Activated T-helper 1 cell treated with anti-CD3 and anti-CD28 coated beads, Interleukin-12 subunit alpha, Interleukin-12 subunit beta, Interleukin-2, Interleukin-4 antibody, amounts not matched to agents 30 ng/mL and 10 ng/mL and 1 ng/mL, durations not matched to agents 14 hours and 24 hours and 36 hours (primary cell): ENCODE measurements at regions of chr3 and their contacts with region 1.

Region 1: DNA sequence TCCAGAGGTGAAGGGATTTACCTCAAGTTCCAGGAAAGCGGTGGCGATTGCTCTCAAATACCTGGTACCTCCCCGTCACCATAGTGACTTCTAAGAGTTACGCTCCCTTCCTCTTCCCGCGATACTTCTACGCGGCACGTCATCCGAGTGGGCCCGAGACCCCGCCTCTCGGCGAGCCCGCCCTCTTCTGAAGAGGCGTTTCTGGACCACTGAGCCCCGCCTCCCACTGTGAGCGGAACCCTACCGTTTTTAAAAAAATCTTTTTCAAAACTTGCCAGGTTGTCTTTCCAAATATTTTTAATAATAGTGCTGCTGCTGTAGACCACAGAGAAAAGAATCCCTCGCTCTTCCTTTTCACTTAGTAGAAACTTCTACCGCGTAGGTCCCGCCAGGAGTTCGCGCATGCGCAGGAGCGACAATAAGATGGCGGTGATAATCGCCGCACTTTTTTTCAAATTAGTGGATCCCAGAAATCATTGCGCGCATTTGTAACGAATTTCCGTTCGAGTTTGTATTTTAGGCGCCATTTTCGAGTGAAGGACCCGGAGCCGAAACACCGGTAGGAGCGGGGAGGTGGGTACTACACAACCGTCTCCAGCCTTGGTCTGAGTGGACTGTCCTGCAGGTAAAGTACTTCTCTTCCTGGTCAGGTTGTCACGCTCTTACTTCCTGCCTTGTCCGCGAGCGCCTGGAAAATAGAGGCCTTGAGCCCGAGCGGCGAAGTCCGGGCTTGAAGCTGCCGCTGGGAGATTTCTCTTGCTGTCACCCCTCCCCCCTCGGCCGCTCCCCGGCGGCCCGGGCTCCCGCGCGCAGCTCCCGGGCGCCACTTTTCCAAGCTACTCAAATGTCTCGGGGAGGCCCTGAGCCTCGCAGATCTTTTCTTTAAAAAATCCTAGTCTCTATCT is at the starts of genes IFT80 and SMC4:
- DNase-seq: peak; percentile 93
- H3K4me3 Mint-ChIP-seq: peak within 1 kb of the TSS; percentile 96
- H3K27ac Mint-ChIP-seq: peak within 1 kb of the TSS; percentile 98
- H3K4me1 Mint-ChIP-seq: peaks cover 57% of the 10 kb centered on the region
- H3K27me3 Mint-ChIP-seq: peaks cover 6% of the 10 kb centered on the region
- total RNA-seq, gene IFT80: 14.0 and 14.8 TPM in 2 replicates
- total RNA-seq, gene SMC4: 163 and 164 TPM in 2 replicates

Region 2: GRCh38 chr3:160163229-160163878 is 236.0 kb before region 1 on chr3:
- intact Hi-C with region 1: loop called (anchors 5 kb)
- DNase-seq: no peak
- H3K4me3 Mint-ChIP-seq: no peak overlapping the region
- H3K27ac Mint-ChIP-seq: no peak overlapping the region
- H3K4me1 Mint-ChIP-seq: no peaks in the 10 kb centered on the region
- H3K27me3 Mint-ChIP-seq: peaks cover 13% of the 10 kb centered on the region

Region 3: DNA sequence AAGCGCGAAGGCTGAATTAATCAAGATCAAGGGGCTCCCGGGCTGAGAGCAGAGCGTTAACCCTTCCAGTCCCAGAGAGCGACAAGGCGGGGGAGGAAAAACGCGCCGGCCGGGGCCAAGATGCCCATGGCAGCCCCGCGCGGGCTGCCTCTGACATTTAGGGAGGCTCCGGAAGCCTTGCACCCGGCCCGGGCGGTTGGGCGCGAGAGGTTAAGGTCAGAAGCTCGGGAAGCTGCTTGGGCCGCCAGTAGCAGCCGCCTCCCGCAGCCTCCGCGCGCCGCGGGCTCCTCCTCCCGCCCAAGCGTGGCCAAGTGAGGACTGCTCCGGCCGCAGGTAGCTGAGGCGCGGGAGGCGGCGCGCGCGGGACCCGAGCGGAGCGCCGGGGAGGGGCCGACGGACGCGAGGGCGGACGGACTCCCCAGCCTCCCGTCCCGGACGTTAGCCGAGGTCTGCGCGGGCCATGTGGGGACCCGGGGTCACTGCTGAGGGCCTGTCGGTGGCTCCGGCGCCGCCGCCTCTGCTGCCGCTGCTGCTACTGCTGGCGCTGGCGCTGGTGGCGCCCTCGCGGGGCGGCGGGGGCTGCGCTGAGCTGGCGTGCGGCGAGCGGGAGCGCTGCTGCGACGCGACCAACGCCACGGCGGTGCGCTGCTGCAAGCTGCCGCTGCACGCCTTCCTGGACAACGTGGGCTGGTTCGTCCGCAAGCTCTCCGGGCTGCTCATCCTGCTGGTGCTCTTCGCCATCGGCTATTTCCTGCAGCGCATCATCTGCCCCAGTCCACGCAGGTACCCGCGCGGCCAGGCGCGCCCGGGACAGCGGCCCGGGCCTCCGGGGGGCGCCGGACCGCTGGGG is 174.0 kb before region 1 on chr3 and contains the start of gene C3orf80:
- intact Hi-C with region 1: loop called (anchors 5 kb)
- DNase-seq: peak; percentile 37
- H3K4me3 Mint-ChIP-seq: peak within 1 kb of the TSS; percentile 77
- H3K27ac Mint-ChIP-seq: peak within 1 kb of the TSS; percentile 40
- H3K4me1 Mint-ChIP-seq: peaks cover 14% of the 10 kb centered on the region
- H3K27me3 Mint-ChIP-seq: peaks cover 66% of the 10 kb centered on the region
- total RNA-seq, gene C3orf80: 0.18 and 0.42 TPM in 2 replicates

Region 4: GRCh38 chr3:160355826-160356225 is 43.6 kb before region 1 on chr3:
- intact Hi-C with region 1: no loop called
- DNase-seq: no peak
- H3K4me3 Mint-ChIP-seq: no peak overlapping the region
- H3K27ac Mint-ChIP-seq: no peak overlapping the region
- H3K4me1 Mint-ChIP-seq: no peaks in the 10 kb centered on the region
- H3K27me3 Mint-ChIP-seq: no peaks in the 10 kb centered on the region

Region 5: DNA sequence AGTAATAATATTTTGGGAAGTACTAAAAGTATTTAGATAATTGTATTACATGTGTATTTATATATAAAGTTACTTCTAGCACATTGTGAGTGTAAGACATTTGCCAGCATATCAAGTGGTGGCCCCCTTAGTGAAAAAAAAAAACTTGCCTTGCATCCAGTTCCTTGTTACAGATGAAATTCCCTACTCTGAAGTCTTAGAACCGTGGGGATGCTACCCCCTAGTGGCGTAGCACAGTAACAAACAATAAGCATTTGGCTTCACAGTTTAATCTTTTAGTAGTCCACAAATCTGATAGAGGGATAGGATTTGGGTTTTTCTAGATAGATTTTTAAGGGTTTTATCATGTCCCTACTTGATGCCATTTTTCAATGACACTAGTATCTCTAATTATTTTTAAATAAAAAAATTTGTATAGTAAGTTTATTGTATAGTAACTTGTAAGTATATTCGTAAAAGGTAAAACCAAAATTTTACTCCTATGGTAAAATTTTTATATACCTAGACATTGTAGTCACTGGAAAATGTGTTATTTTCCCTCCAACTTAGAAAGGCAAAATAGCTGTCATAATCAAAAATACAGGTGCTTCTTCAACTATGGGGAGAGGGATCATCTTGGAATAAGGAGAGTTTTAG is 14.4 kb after region 1 on chr3:
- intact Hi-C with region 1: loop called (anchors 1 kb)
- DNase-seq: peak; percentile 58
- H3K4me3 Mint-ChIP-seq: no peak overlapping the region
- H3K27ac Mint-ChIP-seq: no peak overlapping the region
- H3K4me1 Mint-ChIP-seq: peaks cover 49% of the 10 kb centered on the region
- H3K27me3 Mint-ChIP-seq: no peaks in the 10 kb centered on the region

Region 6: GRCh38 chr3:160449636-160450598 is 50.5 kb after region 1 on chr3 and contains the start of gene TRIM59:
- intact Hi-C with region 1: loop called (anchors 1 kb)
- DNase-seq: peak; percentile 97
- H3K4me3 Mint-ChIP-seq: peak within 1 kb of the TSS; percentile 95
- H3K27ac Mint-ChIP-seq: peak within 1 kb of the TSS; percentile 95
- H3K4me1 Mint-ChIP-seq: peaks cover 29% of the 10 kb centered on the region
- H3K27me3 Mint-ChIP-seq: peaks cover 6% of the 10 kb centered on the region
- total RNA-seq, gene TRIM59: 33.1 and 33.2 TPM in 2 replicates

Region 7: GRCh38 chr3:160720123-160720746 is 320.9 kb after region 1 on chr3:
- intact Hi-C with region 1: no loop called
- DNase-seq: no peak
- H3K4me3 Mint-ChIP-seq: no peak overlapping the region
- H3K27ac Mint-ChIP-seq: no peak overlapping the region
- H3K4me1 Mint-ChIP-seq: no peaks in the 10 kb centered on the region
- H3K27me3 Mint-ChIP-seq: peaks cover 18% of the 10 kb centered on the region

Region 8: GRCh38 chr3:160754855-160755747 is 355.7 kb after region 1 on chr3:
- intact Hi-C with region 1: loop called (anchors 1 kb)
- DNase-seq: peak; percentile 84
- H3K4me3 Mint-ChIP-seq: peak overlapping the region; percentile 93
- H3K27ac Mint-ChIP-seq: peak overlapping the region; percentile 98
- H3K4me1 Mint-ChIP-seq: peaks cover 37% of the 10 kb centered on the region
- H3K27me3 Mint-ChIP-seq: peaks cover 40% of the 10 kb centered on the region

Region 9: DNA sequence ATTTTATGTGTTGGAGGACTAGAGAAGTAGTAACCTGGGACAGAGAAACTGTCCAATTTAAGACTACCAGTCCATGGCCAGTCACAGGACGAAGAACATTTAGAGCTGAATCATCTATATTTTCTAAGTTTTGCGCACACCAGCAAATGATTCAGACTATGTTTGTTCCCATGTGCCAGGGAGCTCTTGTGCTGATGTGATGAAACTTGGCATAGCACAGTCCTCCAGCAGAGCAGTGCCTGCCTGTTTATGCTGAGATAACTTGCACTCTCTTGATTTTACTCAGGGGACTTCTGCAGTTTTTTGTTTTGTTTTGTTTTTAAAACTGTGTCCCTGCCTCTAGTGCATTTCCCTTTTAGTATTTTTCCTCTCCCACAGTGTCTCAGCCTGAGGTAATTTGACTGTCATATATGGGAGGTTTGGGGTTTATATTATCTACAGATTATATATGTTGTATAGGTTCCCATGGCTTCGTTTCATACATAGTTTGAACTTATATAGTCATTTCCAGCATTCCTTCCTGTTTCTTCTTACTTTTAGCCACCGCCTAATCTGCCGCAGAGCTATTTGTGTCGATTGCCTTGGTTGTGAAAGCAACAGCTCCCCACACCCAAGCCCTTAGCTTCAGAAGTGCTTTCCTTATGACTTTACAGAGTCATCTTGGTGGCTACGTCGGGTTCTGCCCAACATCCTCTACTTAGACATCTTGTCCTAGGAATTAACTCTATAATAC is 402.2 kb after region 1 on chr3:
- intact Hi-C with region 1: loop called (anchors 1 kb)
- DNase-seq: peak; percentile 70
- H3K4me3 Mint-ChIP-seq: peak overlapping the region; percentile 64
- H3K27ac Mint-ChIP-seq: peak overlapping the region; percentile 85
- H3K4me1 Mint-ChIP-seq: peaks cover 36% of the 10 kb centered on the region
- H3K27me3 Mint-ChIP-seq: peaks cover 12% of the 10 kb centered on the region